ENCODE measurements at regions of chr2 and their contacts with region 1.

Region 1: DNA sequence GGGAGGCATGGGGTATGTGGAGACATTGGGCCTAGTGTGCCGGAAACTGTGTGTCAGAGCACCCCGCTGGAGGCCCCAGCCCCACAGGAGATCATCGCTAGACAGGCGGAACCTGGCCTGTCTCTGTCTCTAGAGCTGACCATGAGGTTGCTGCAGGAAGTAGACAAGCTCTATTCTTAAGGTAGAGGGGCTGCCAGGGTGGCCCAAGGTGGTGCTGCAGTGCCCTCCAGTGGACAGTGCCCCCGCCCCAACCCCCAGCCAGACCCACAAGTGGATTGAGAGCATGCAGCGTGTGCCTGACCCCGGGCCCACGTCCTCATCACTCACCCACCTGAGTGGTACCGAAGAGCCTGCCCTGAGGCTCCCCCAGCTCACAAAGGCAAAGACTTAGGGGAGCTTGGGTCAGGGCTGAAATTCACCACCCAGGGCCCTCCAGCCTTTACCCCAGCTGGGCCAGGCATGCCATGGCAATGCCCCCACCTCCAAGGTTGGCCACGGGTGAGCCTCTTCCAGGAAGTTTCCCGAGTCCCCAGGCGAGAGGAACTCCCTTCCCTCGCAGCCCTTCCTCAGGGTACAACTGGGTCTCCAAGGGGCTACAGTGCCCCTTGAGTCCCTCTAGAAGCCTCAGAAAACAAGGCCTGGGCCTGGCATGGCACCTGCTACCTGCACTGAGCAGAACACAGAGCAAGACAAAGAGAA is 155.0 kb downstream of the TTC32 start:
- DNase-seq: no peak

Region 2: GRCh38 chr2:19801367-19802080 is 54.8 kb after region 1 on chr2:
- intact Hi-C with region 1: no loop called
- DNase-seq: peak; percentile 95

Region 3: GRCh38 chr2:19855542-19856431 is 109.0 kb after region 1 on chr2:
- intact Hi-C with region 1: loop called in 1 of 2 experiments (anchors 5 kb)
- DNase-seq: no peak